Mammary epithelial cell (primary cell): ENCODE measurements at regions of chr9 and their contacts with region 1.

Region 1: DNA sequence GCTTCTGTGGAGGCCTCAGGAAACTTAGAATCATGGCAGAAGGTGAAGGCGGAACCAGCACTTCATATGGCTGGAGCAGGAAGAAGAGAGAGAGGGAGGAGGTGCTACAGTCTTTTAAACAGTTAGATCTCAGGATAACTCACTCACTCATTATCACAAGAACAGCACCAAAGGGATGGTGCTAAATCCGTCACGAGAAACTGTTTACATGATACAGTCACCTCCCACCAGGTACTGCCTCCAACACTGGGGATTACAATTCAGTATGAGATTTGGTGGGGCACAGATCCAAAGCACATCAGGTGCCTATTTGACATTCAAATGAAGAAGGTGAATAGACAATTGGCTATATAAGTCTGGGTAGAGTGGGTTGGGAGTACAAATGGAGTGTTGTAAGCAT is 35.2 kb downstream of the FKTN start:
- DNase-seq: no peak
- H3K4me3 ChIP-seq: no peak overlapping the region
- H3K27ac ChIP-seq: no peak overlapping the region
- H3K4me1 ChIP-seq: no peaks in the 10 kb centered on the region
- H3K27me3 ChIP-seq: no peaks in the 10 kb centered on the region
- CTCF ChIP-seq: no peak

Region 2: DNA sequence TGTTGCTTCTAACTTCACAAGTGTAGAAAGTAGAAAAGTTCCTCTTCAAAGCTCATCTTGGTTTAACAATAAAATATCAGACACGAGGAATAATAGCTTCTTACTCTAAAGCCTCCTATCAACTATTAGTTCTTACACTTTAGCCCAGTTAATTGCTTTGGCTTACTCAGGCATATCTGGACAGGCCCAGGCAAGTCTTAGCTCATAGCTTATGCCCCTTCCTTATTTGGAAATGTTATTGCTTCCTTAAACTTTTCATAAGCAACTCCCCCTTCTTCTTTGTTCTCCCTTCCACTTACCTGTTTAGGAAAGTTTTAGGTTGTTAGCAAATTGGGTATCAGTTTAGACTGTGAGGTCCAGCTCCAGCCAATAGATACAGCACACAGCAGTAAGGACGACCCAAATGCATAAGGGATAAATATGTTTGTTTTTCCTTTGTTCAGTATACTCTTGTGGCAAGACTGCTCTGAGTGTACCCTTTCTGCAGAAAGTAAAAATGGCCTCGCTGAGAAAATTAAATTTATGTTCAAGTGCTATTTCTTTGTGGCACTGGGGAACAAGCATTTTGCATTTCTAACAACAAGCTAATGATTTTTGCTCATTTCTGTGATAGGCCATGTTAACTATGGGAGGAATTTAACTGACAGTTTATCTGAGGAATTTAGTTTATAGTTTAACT is 1337.0 kb before region 1 on chr9:
- CTCF ChIA-PET with region 1: no interaction called
- dilution Hi-C with region 1: no loop called
- in situ Hi-C with region 1: no loop called
- intact Hi-C with region 1: no loop called
- DNase-seq: peak; percentile 59
- H3K4me3 ChIP-seq: no peak overlapping the region
- H3K27ac ChIP-seq: no peak overlapping the region
- H3K4me1 ChIP-seq: peaks cover 5% of the 10 kb centered on the region
- H3K27me3 ChIP-seq: no peaks in the 10 kb centered on the region
- CTCF ChIP-seq: no peak

Region 3: GRCh38 chr9:105557771-105558610 is 35.2 kb before region 1 on chr9 and contains the start of gene FKTN:
- CTCF ChIA-PET with region 1: no interaction called
- dilution Hi-C with region 1: no loop called
- in situ Hi-C with region 1: no loop called
- intact Hi-C with region 1: no loop called
- DNase-seq: peak; percentile 86
- H3K4me3 ChIP-seq: peak within 1 kb of the TSS; percentile 85 to 94 (median 87)
- H3K27ac ChIP-seq: peak within 1 kb of the TSS; percentile 18
- H3K4me1 ChIP-seq: peaks cover 5% of the 10 kb centered on the region
- H3K27me3 ChIP-seq: no peaks in the 10 kb centered on the region
- CTCF ChIP-seq: no peak
- total RNA-seq, gene FKTN: 27.5 to 30.0 TPM

Region 4: GRCh38 chr9:105667867-105668266 is 74.7 kb after region 1 on chr9:
- CTCF ChIA-PET with region 1: no interaction called
- dilution Hi-C with region 1: loop called (anchors 5 kb)
- in situ Hi-C with region 1: no loop called
- intact Hi-C with region 1: no loop called
- DNase-seq: no peak
- H3K4me3 ChIP-seq: no peak overlapping the region
- H3K27ac ChIP-seq: no peak overlapping the region
- H3K4me1 ChIP-seq: no peaks in the 10 kb centered on the region
- H3K27me3 ChIP-seq: no peaks in the 10 kb centered on the region
- CTCF ChIP-seq: no peak